Activated CD8-positive, alpha-beta memory T cell treated with anti-CD3 and anti-CD28 coated beads, Interleukin-2, amount 10 ng/mL, durations not matched to agents 7 days and 5 days (primary cell): ENCODE measurements at regions of chr13 and their contacts with region 1.

Region 1: DNA sequence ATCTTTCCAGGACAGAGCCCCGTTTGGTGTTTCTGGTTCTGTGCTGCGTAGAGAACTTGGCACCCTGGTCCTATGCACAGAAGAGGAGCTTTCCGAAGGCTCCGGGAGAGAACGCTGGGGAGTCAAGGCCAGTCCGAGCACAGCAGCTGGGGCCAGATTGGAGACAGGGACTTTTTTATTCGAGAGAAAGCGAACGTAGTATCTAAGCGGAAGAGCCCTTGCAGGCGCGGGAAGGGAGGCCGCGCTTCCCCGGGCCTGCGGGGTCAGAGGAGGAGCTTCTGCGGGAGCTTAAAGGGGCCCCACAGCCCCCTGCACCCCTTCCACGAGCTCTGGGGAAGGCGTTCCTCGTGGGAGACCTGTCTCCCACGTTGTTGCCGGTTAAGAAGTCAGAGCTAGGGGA is 48.6 kb upstream of the ARHGEF7 start:
- DNase-seq: no peak
- ATAC-seq: no peak
- H3K4me3 Mint-ChIP-seq: peak overlapping the region; percentile 38
- H3K27ac Mint-ChIP-seq: no peak overlapping the region
- H3K4me1 Mint-ChIP-seq: peaks cover 11% of the 10 kb centered on the region
- H3K27me3 Mint-ChIP-seq: peaks cover 83% of the 10 kb centered on the region

Region 2: GRCh38 chr13:110869805-110870706 is 196.5 kb before region 1 on chr13:
- CTCF ChIA-PET with region 1: no interaction called
- DNase-seq: no peak
- ATAC-seq: peak; percentile 40
- H3K4me3 Mint-ChIP-seq: no peak overlapping the region
- H3K27ac Mint-ChIP-seq: no peak overlapping the region
- H3K4me1 Mint-ChIP-seq: peaks cover 15% of the 10 kb centered on the region
- H3K27me3 Mint-ChIP-seq: peaks cover 37% of the 10 kb centered on the region

Region 3: GRCh38 chr13:111046590-111047141 is 19.9 kb before region 1 on chr13:
- CTCF ChIA-PET with region 1: interaction called, 14 read pairs
- DNase-seq: peak; percentile 48
- ATAC-seq: peak; percentile 72
- H3K4me3 Mint-ChIP-seq: no peak overlapping the region
- H3K27ac Mint-ChIP-seq: peak overlapping the region; percentile 41
- H3K4me1 Mint-ChIP-seq: peaks cover 12% of the 10 kb centered on the region
- H3K27me3 Mint-ChIP-seq: peaks cover 8% of the 10 kb centered on the region

Region 4: GRCh38 chr13:111161601-111162600 is 95.4 kb after region 1 on chr13:
- CTCF ChIA-PET with region 1: interaction called, 11 read pairs
- DNase-seq: no peak
- ATAC-seq: no peak
- H3K4me3 Mint-ChIP-seq: no peak overlapping the region
- H3K27ac Mint-ChIP-seq: no peak overlapping the region
- H3K4me1 Mint-ChIP-seq: peaks cover 33% of the 10 kb centered on the region
- H3K27me3 Mint-ChIP-seq: no peaks in the 10 kb centered on the region

Region 5: GRCh38 chr13:111187960-111188541 is 121.5 kb after region 1 on chr13:
- CTCF ChIA-PET with region 1: interaction called, 14 read pairs
- DNase-seq: peak; percentile 43
- ATAC-seq: peak; percentile 8
- H3K4me3 Mint-ChIP-seq: peak overlapping the region; percentile 62
- H3K27ac Mint-ChIP-seq: peak overlapping the region; percentile 86
- H3K4me1 Mint-ChIP-seq: peaks cover 75% of the 10 kb centered on the region
- H3K27me3 Mint-ChIP-seq: no peaks in the 10 kb centered on the region

Region 6: GRCh38 chr13:111216166-111216960 is 149.8 kb after region 1 on chr13:
- CTCF ChIA-PET with region 1: interaction called, 65 read pairs
- DNase-seq: peak; percentile 59
- ATAC-seq: peak; percentile 51
- H3K4me3 Mint-ChIP-seq: no peak overlapping the region
- H3K27ac Mint-ChIP-seq: no peak overlapping the region
- H3K4me1 Mint-ChIP-seq: peaks cover 5% of the 10 kb centered on the region
- H3K27me3 Mint-ChIP-seq: no peaks in the 10 kb centered on the region

Region 7: DNA sequence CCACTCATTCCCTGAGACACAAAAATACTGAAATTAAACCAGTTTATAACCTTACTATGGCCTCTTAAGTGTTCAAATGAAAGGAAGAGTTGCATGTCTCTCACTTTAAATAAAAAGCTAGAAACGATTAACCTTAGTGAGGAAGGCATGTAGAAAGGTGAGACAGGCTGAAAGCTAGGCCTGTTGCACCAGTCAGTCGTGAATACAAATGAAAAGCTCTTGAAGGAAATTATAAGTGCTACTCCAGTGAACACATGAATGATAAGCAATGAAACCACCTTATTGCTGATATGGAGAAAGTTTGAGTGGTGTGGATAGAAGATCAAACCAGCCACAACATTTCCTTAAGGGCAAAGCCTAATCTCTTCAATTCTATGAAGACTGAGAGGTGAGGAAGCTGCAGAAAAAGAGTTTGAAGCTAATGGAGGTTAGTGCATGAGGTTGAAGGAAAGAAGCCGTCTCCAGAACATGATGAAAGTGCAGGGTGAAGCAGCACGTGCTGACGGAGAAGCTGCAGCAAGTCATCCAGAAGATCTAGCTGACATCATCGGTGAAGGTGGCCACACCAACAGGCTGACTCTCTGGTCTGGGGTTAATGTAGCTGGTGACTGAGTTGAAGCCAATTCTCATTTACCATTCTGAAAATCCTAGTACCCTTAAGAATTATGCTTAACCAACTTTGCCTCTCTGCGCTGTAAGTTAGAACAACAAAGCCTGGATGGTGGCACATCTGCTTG is 159.4 kb after region 1 on chr13:
- CTCF ChIA-PET with region 1: interaction called, 34 read pairs
- DNase-seq: no peak
- ATAC-seq: no peak
- H3K4me3 Mint-ChIP-seq: no peak overlapping the region
- H3K27ac Mint-ChIP-seq: no peak overlapping the region
- H3K4me1 Mint-ChIP-seq: peaks cover 24% of the 10 kb centered on the region
- H3K27me3 Mint-ChIP-seq: no peaks in the 10 kb centered on the region